ENCODE measurements at regions of chr3 and their contacts with region 1.

Region 1: DNA sequence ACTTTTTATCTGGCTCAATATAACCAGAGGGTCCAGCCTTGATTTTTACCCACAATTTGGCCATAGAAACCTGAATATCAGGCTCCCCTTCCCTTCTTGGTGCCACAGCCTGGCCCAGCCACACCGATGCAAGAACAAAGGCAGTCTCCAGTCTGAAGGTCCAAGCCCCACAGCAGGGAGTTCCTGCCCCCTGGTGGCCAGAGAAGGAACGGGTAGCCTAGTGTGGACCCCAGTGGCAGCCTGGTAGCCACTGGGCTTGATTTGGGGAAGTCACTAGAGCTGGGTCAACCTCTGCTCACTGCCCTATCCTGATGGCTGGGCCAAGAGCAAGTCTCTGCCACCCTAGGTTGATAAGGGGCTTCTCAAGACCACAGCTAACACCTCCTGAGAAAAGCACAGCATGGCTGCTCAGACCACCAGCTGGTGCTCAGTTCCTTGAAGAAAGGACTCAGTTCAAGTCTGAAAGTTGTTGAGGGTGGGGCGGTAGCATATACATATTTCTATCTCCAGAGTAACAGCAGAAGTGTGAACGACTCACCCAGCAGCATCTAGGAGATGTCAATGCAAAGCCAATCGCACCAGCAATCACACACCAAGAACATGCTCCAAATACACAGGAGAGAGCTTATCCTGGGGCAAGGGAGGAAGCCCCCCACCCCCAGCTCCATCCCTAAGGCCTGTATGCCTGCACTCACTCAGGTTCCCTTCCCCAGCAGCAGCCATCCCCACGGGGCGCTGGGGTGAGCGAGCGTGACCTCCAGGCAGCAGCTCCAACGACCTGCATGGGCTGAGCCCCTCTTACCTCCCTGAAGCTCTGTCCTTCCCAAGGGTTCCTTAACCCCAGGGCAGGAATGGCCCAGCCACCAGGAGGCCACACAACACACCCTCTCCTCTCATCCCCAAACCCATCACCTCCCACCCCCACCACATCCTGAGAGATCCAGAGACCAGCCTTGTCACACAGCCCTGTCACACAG is 7.6 kb downstream of the PFKFB4 start:
- DNase-seq: peak; percentile 88 to 91
- ATAC-seq: peak; percentile 93 to 99 (median 94)
- H3K4me3 ChIP-seq: no peak overlapping the region
- H3K27ac ChIP-seq: no peak overlapping the region
- H3K4me1 ChIP-seq: peaks cover under 1% of the 10 kb centered on the region
- H3K27me3 ChIP-seq: no peaks in the 10 kb centered on the region
- CTCF ChIP-seq: peak; percentile 94

Region 2: GRCh38 chr3:48273594-48274211 is 275.3 kb before region 1 on chr3:
- intact Hi-C with region 1: loop called in 1 of 2 experiments (anchors 5 kb)
- DNase-seq: no peak
- ATAC-seq: peak; percentile 51 to 84 (median 70)
- H3K4me3 ChIP-seq: no peak overlapping the region
- H3K27ac ChIP-seq: no peak overlapping the region
- H3K4me1 ChIP-seq: no peaks in the 10 kb centered on the region
- H3K27me3 ChIP-seq: no peaks in the 10 kb centered on the region
- CTCF ChIP-seq: peak; percentile 75

Region 3: DNA sequence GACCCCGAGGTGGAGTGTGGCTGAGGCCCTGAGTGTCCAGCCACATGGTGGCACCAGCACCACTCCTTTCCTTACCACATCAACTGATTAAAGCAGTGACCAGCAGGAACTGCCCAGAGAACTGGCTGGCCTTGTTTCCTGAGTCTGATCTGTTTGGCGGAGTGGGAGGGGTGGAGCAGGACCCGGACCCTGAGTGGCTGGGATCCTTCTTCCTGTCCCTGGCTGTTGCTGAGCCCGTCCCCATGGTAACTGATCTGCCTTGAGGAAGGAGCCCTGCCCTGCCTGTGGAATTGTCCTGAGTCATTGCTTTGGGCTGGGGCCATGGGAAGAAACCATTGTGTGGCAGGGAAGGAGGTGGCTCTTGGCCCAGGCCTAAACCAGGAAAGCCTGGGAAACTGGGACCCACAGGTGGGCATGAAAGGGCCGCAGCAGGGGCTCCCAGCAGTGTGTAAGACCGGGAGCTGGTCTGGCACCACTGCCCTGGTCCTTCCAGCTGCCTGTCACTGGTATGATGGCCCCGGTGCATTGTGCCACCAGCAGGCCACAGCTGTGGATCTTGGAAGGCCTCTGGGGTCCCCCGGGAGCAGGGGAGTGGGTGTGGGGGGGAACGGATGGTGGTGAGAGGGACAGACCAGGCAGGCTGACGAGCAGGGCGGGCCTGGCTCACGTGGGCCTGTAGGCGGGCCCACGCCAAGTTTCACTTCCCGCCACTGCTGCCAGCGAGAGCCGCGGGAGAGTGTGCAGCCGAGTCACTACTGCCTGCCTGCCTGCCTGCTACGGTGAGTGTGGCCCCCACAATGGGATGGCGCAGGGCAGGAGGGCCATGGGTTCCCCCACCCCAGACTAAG is 83.3 kb before region 1 on chr3:
- intact Hi-C with region 1: loop called (anchors 1 to 2 kb)
- DNase-seq: peak; percentile 97 to 98
- ATAC-seq: peak; percentile 92 to 93 (median 93)
- H3K4me3 ChIP-seq: peak overlapping the region; percentile 77
- H3K27ac ChIP-seq: peak overlapping the region; percentile 99
- H3K4me1 ChIP-seq: peaks cover 34% of the 10 kb centered on the region
- H3K27me3 ChIP-seq: no peaks in the 10 kb centered on the region
- CTCF ChIP-seq: peak; percentile 79

Region 4: GRCh38 chr3:48507351-48508061 is 41.5 kb before region 1 on chr3:
- intact Hi-C with region 1: loop called in 1 of 2 experiments (anchors 1 kb)
- DNase-seq: peak; percentile 61 to 76
- ATAC-seq: peak; percentile 76 to 85 (median 80)
- H3K4me3 ChIP-seq: no peak overlapping the region
- H3K27ac ChIP-seq: peak overlapping the region; percentile 64
- H3K4me1 ChIP-seq: peaks cover 15% of the 10 kb centered on the region
- H3K27me3 ChIP-seq: no peaks in the 10 kb centered on the region
- CTCF ChIP-seq: peak; percentile 56